GM18951 (cell line): ENCODE measurements at regions of chr6 and their contacts with region 1.

Region 1: GRCh38 chr6:99746261-99746895 is 139.7 kb downstream of the PRDM13 start:
- POLR2A ChIP-seq: no peak

Region 2: GRCh38 chr6:99305021-99305554 is 441.3 kb before region 1 on chr6:
- in situ Hi-C with region 1: loop called (anchors 25 kb)
- POLR2A ChIP-seq: no peak

Region 3: GRCh38 chr6:99588618-99589289 is 157.6 kb before region 1 on chr6:
- in situ Hi-C with region 1: loop called (anchors 10 kb)
- POLR2A ChIP-seq: no peak

Region 4: DNA sequence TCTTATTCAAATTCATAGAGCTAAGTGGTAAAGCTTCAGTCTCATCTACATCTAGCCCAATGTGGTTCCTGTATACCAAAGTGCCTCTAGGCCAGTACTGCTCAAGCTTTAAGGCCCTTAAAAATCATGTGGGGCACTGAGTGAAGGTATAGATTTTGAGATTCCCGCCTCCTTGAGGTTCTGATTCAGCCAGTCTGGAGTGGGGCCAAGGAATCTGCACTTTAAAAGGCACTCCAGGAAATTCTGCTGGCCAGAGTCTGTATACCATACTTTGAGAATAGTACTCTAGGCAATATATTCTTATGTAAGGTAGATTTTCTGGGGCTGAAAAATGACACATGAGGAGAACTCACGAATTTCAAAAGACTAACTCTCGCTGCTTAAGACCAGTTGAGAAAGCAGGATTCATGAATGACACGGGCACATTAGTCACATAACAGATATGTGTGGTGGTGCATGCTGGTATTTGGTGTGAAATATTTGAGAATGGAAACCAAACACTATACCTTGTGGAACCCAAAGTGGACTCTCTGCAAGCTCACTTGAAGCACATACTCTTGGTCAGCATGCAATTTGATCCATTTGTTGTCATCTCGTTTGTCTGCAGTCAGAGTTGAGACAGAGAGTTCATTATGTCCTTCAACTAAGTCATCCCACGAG is 766.0 kb after region 1 on chr6:
- in situ Hi-C with region 1: no loop called
- POLR2A ChIP-seq: no peak